Psoas muscle (tissue), 8 donors: ENCODE measurements at regions of chr16 and their contacts with region 1.

Region 1: DNA sequence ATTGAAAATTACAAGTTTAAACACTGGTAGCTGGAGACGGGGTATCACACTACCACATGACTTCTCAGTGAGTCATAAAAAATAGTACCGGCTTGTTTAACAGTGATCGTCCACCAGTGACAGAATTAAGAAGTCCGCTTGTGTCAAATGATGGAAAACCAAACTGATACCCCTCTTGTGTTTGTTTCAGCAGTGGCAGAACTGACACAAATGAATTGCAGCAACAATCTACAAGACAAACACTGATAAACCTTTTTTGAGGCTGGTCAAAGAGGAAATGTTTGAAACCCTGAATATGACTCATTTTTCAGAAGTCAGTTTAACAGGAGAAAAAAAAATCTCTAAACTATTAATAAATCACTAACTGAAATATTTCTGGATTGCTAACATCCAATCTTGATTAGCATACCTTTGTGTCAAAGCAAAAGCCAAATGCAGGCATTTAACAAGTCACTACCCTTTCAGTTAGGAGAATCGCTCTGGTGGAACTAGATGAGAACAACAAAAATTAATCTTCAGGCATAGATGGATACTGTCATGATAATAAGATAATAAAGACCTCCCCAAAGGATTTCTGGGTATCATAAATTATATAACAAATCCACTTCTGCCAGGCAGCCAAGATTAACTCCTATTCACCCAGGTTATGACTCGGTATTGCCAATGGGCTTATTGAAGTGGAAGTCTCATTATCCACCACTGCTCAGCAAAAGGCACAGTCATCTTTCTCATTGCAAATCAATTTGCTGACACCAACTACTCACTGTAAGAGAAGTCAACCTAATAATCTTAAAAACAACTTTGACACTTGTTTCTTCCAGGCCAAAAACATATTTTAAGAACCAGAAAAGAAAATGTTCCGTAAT is 20.8 kb downstream of the DCUN1D3 start:
- DNase-seq: no peak
- ATAC-seq: peak in 1 of 4 donors; percentile 56
- H3K4me3 ChIP-seq: no peak overlapping the region
- H3K27ac ChIP-seq: peak overlapping the region; percentile 12
- H3K4me1 ChIP-seq: peaks cover 19% of the 10 kb centered on the region
- H3K27me3 ChIP-seq: no peaks in the 10 kb centered on the region
- CTCF ChIP-seq: no peak

Region 2: GRCh38 chr16:20844588-20844987 is 34.8 kb before region 1 on chr16:
- intact Hi-C with region 1: no loop called
- DNase-seq: no peak
- ATAC-seq: no peak
- H3K4me3 ChIP-seq: no peak overlapping the region
- H3K27ac ChIP-seq: no peak overlapping the region
- H3K4me1 ChIP-seq: no peaks in the 10 kb centered on the region
- H3K27me3 ChIP-seq: no peaks in the 10 kb centered on the region
- CTCF ChIP-seq: no peak

Region 3: GRCh38 chr16:20918486-20919239 is 39.3 kb after region 1 on chr16:
- intact Hi-C with region 1: loop called in 1 of 2 experiments (anchors 2 kb)
- DNase-seq: peak; percentile 75 to 77
- ATAC-seq: peak; percentile 44 to 90 (median 80)
- H3K4me3 ChIP-seq: no peak overlapping the region
- H3K27ac ChIP-seq: no peak overlapping the region
- H3K4me1 ChIP-seq: peaks cover 7% of the 10 kb centered on the region
- H3K27me3 ChIP-seq: no peaks in the 10 kb centered on the region
- CTCF ChIP-seq: no peak